ENCODE measurements at regions of chrX and their contacts with region 1.

Region 1: GRCh38 chrX:111244235-111244750 is 26.0 kb downstream of the CAPN6 start:
- DNase-seq: no peak
- H3K4me3 ChIP-seq: no peak overlapping the region
- H3K27ac ChIP-seq: no peak overlapping the region
- H3K4me1 ChIP-seq: no peaks in the 10 kb centered on the region
- H3K27me3 ChIP-seq: no peaks in the 10 kb centered on the region
- CTCF ChIP-seq: peak in 1 of 4 experiments; percentile 22
- EP300 ChIP-seq: no peak
- POLR2A ChIP-seq: no peak

Region 2: GRCh38 chrX:110853610-110854009 is 390.7 kb before region 1 on chrX:
- intact Hi-C with region 1: loop called (anchors 2 kb)
- DNase-seq: no peak
- H3K4me3 ChIP-seq: no peak overlapping the region
- H3K27ac ChIP-seq: no peak overlapping the region
- H3K4me1 ChIP-seq: no peaks in the 10 kb centered on the region
- H3K27me3 ChIP-seq: no peaks in the 10 kb centered on the region
- CTCF ChIP-seq: peak in 1 of 4 experiments; percentile 34
- EP300 ChIP-seq: no peak
- POLR2A ChIP-seq: no peak

Measured in sigmoid colon (tissue), 7 donors.